Left lung (tissue), 14 donors: ENCODE measurements at regions of chr10 and their contacts with region 1.

Region 1: DNA sequence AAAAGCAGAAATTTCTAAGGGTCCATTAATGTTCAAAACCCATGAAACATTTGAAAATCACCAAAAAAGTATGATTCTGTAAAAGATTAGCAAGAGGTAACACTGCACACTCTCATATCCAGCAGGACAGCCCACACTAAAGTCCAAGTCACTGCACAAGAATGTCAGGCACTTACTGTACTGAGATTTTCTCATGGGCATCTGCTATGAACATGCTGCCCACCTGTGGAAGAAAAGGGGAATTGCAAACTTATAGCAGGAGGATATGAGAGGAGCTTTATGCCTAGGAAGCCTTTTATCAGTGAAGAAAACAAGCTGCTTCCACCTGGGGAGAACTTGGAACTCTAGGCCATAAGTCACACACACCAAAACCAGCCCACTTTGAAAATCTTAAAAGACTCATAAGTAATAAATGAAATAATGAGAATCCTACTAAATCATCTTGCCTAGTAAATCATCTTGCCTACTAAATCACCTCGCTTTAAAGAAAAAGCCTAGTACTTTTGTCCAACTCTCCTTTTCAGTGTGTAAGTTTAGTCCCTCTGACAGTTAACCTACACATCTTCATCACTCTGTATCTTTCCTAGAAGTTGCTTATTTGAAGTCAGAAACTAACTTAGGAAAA is 46.1 kb downstream of the ARMH3 start:
- DNase-seq: peak in 3 of 4 donors; percentile 33 to 76 (median 46)
- ATAC-seq: peak; percentile 100
- H3K4me3 ChIP-seq: no peak overlapping the region
- H3K27ac ChIP-seq: no peak overlapping the region
- H3K4me1 ChIP-seq: peaks cover 0 to 14% of the 10 kb centered on the region in 2 donors
- H3K27me3 ChIP-seq: no peaks in the 10 kb centered on the region
- CTCF ChIP-seq: peak; percentile 77 to 82

Region 2: GRCh38 chr10:101682172-101682825 is 327.6 kb before region 1 on chr10:
- intact Hi-C with region 1: no loop called
- DNase-seq: no peak
- ATAC-seq: peak; percentile 69
- H3K4me3 ChIP-seq: no peak overlapping the region
- H3K27ac ChIP-seq: peak overlapping the region in 1 of 2 donors; percentile 37
- H3K4me1 ChIP-seq: peaks cover 9 to 29% of the 10 kb centered on the region in 2 donors
- H3K27me3 ChIP-seq: no peaks in the 10 kb centered on the region
- CTCF ChIP-seq: no peak

Region 3: GRCh38 chr10:101840741-101841453 is 169.0 kb before region 1 on chr10:
- intact Hi-C with region 1: loop called in 1 of 2 experiments (anchors 10 kb)
- DNase-seq: peak; percentile 81 to 97 (median 86)
- ATAC-seq: peak; percentile 94
- H3K4me3 ChIP-seq: peak overlapping the region in 1 of 2 donors; percentile 38
- H3K27ac ChIP-seq: no peak overlapping the region
- H3K4me1 ChIP-seq: peaks cover 7 to 40% of the 10 kb centered on the region in 2 donors
- H3K27me3 ChIP-seq: peaks cover 0 to 6% of the 10 kb centered on the region in 2 donors
- CTCF ChIP-seq: peak; percentile 84 to 94

Region 4: GRCh38 chr10:101889256-101890210 is 120.4 kb before region 1 on chr10:
- intact Hi-C with region 1: loop called in 1 of 2 experiments (anchors 5 kb)
- DNase-seq: peak in 3 of 4 donors; percentile 31 to 66 (median 65)
- ATAC-seq: peak; percentile 82
- H3K4me3 ChIP-seq: no peak overlapping the region
- H3K27ac ChIP-seq: no peak overlapping the region
- H3K4me1 ChIP-seq: no peaks in the 10 kb centered on the region
- H3K27me3 ChIP-seq: no peaks in the 10 kb centered on the region
- CTCF ChIP-seq: peak; percentile 68 to 71